ENCODE measurements at regions of chr1 and their contacts with region 1.

Region 1: DNA sequence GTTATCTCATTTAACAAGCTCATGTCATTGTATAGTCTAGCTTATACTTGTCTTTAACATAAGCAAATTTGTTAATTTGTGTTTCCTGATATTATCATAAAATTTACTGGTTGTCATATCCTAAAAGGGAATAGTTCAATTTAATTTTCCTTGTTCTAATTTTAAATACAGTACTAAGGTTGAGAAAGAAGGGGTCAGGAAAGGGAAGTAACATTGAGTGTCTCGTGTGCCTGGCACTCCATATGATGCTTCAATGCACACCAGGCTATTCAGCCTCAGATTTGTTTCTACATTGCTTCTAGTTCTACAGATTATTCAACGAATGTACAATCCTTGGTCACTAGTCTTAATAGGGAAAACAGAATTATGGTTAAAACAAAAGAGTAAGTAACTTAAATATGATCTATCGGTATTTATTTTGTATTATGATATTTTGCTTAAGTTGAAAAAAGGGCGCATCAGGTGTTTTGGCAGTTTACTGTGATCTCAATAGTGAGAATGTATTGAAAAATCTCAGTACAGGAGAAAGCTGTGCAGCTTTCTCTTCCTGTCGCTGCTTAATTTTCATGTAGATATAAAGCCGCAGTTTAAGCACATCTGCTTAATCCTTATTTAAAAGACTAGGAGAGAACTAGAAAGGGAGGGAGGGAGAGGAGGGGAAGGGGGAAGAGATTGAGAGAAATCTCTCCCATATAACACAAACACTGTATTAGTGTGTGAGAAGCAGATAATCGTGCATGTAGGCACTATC is 13.0 kb downstream of the PTPRC start:
- DNase-seq: no peak
- ATAC-seq: no peak
- H3K4me3 Mint-ChIP-seq: peak overlapping the region; percentile 71
- H3K27ac Mint-ChIP-seq: peak overlapping the region; percentile 96
- H3K4me1 Mint-ChIP-seq: peaks cover 72% of the 10 kb centered on the region
- H3K27me3 Mint-ChIP-seq: no peaks in the 10 kb centered on the region
- CTCF ChIP-seq: no peak

Region 2: DNA sequence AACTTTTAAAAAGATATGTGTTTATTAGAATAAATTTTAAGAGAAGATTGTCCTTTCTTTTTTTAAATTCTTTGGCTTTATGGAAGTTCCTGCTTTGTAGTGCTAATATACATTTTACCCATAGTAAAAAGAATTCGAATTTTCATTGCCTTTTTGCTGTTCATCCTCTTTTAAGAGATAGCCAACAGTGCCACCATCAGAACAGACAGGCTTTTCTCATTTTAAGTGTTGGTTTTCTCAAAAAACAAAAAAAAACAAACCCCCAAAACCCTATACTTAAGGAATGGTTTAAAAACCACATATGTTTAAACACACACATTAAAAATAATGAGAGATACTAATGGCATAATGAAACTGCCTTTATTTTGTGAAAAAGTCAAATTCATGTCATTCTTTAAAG is 376.2 kb before region 1 on chr1:
- CTCF ChIA-PET with region 1: no interaction called
- POLR2A ChIA-PET with region 1: no interaction called
- intact Hi-C with region 1: no loop called
- DNase-seq: no peak
- ATAC-seq: no peak
- H3K4me3 Mint-ChIP-seq: no peak overlapping the region
- H3K27ac Mint-ChIP-seq: no peak overlapping the region
- H3K4me1 Mint-ChIP-seq: peaks cover 31% of the 10 kb centered on the region
- H3K27me3 Mint-ChIP-seq: no peaks in the 10 kb centered on the region
- CTCF ChIP-seq: no peak

Region 3: GRCh38 chr1:198520524-198521254 is 131.1 kb before region 1 on chr1:
- CTCF ChIA-PET with region 1: interaction called, 3 read pairs
- POLR2A ChIA-PET with region 1: interaction called, 6 read pairs
- intact Hi-C with region 1: loop called (anchors 5 kb)
- DNase-seq: peak; percentile 37
- ATAC-seq: peak; percentile 60
- H3K4me3 Mint-ChIP-seq: peak overlapping the region; percentile 72
- H3K27ac Mint-ChIP-seq: peak overlapping the region; percentile 92
- H3K4me1 Mint-ChIP-seq: peaks cover 68% of the 10 kb centered on the region
- H3K27me3 Mint-ChIP-seq: no peaks in the 10 kb centered on the region
- CTCF ChIP-seq: no peak

Region 4: GRCh38 chr1:198620951-198621824 is 30.6 kb before region 1 on chr1:
- CTCF ChIA-PET with region 1: interaction called, 6 read pairs
- POLR2A ChIA-PET with region 1: interaction called, 38 read pairs
- intact Hi-C with region 1: loop called (anchors 5 kb)
- DNase-seq: peak; percentile 89
- ATAC-seq: peak; percentile 74
- H3K4me3 Mint-ChIP-seq: peak overlapping the region; percentile 75
- H3K27ac Mint-ChIP-seq: peak overlapping the region; percentile 99
- H3K4me1 Mint-ChIP-seq: peaks cover 83% of the 10 kb centered on the region
- H3K27me3 Mint-ChIP-seq: no peaks in the 10 kb centered on the region
- CTCF ChIP-seq: no peak

Region 5: GRCh38 chr1:198638894-198639635 is 12.8 kb before region 1 on chr1 and contains the start of gene PTPRC:
- CTCF ChIA-PET with region 1: interaction called, 7 read pairs
- POLR2A ChIA-PET with region 1: interaction called, 98 read pairs
- intact Hi-C with region 1: loop called (anchors 2 kb)
- DNase-seq: no peak
- ATAC-seq: peak; percentile 57
- H3K4me3 Mint-ChIP-seq: peak within 1 kb of the TSS; percentile 86
- H3K27ac Mint-ChIP-seq: peak within 1 kb of the TSS; percentile 97
- H3K4me1 Mint-ChIP-seq: peaks cover 39% of the 10 kb centered on the region
- H3K27me3 Mint-ChIP-seq: no peaks in the 10 kb centered on the region
- CTCF ChIP-seq: no peak
- total RNA-seq, gene PTPRC: 475 to 499 TPM

Region 6: DNA sequence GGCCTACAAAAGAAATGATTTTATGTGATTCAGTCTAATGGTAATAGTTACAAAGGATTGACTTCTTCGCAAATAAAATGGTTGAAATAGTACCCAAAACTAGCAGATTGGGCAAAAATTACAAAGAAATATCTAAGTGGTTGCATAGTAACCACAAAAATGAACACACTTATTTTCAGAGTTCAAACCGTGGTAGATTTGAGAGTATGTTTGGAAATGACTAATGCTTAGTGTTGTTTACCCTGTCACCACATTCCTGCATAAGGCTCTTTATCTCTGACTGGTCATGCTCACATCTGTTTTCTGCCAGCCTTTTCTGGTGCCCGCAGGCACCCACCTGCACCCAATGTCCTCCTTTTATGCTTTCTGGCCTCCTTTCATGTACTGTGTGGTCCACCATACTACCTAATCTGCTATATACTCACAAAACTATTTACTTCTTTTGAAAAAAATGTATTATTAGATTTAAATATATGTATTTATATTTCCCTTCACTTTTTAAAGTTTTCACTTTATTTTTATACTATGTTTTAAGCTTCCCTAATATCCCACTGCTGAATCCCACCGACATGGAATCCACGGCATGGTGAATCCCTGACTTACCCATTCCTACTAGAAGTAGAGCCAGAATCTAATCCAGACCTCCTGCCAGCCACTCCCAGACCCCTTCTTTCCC is 17.3 kb after region 1 on chr1:
- CTCF ChIA-PET with region 1: interaction called, 5 read pairs
- POLR2A ChIA-PET with region 1: interaction called, 20 read pairs
- intact Hi-C with region 1: no loop called
- DNase-seq: peak; percentile 57
- ATAC-seq: peak; percentile 78
- H3K4me3 Mint-ChIP-seq: peak overlapping the region; percentile 25
- H3K27ac Mint-ChIP-seq: peak overlapping the region; percentile 93
- H3K4me1 Mint-ChIP-seq: peaks cover 87% of the 10 kb centered on the region
- H3K27me3 Mint-ChIP-seq: no peaks in the 10 kb centered on the region
- CTCF ChIP-seq: no peak

Measured in activated CD8-positive, alpha-beta T cell treated with anti-CD3 and anti-CD28 coated beads for 36 hours (primary cell).